Calu3 (cell line): ENCODE measurements at regions of chr17 and their contacts with region 1.

Region 1: DNA sequence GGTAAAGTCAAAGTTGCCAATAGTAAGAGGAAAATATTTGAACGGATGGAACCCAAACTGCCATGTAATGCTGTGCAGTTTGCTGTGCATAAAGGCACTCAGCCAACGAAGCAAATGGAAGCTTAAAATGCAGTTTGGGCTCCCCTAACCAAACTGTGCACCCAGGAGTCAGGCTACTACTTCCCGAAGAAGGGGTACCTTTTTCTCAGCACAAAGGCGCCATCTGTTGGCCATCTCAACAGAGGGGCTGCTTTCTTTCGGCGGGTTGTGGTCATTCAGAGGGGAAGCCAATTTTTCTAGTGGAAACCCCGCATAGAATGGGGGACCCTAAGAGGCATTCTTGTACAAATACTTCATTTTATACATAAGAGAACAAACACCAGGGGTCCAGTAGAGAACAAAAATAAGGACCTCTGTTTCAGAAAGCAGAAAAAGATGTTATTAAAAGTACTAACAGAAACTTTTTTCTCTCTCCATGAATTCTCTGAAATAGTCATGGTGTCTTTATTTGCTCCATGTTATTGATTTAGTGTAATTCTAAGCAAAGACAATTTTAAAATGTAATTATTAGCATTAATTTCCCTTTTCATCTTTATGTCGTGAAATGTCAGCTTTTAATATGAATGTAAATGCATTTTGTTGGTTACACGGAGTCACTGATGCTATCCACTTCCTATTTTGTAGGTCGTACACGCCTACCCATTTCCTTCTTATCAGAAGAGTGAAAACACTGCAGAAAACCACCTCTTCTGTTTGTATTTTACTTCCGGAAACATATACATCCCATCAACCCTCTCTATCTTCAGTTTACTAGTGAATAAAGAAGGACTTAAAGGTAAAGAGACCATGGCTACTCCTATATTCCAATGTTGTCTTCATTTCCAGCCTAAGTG is 453.3 kb downstream of the KCNJ2 start:
- DNase-seq: peak; percentile 58
- H3K4me3 Mint-ChIP-seq: no peak overlapping the region
- H3K27ac Mint-ChIP-seq: no peak overlapping the region
- H3K4me1 Mint-ChIP-seq: no peaks in the 10 kb centered on the region
- H3K27me3 Mint-ChIP-seq: peaks cover under 1% of the 10 kb centered on the region
- CTCF ChIP-seq: peak; percentile 29

Region 2: GRCh38 chr17:69574257-69575197 is 1048.1 kb before region 1 on chr17:
- CTCF ChIA-PET with region 1: no interaction called
- intact Hi-C with region 1: loop called (anchors 1 kb)
- DNase-seq: no peak
- H3K4me3 Mint-ChIP-seq: no peak overlapping the region
- H3K27ac Mint-ChIP-seq: no peak overlapping the region
- H3K4me1 Mint-ChIP-seq: no peaks in the 10 kb centered on the region
- H3K27me3 Mint-ChIP-seq: no peaks in the 10 kb centered on the region
- CTCF ChIP-seq: no peak

Region 3: DNA sequence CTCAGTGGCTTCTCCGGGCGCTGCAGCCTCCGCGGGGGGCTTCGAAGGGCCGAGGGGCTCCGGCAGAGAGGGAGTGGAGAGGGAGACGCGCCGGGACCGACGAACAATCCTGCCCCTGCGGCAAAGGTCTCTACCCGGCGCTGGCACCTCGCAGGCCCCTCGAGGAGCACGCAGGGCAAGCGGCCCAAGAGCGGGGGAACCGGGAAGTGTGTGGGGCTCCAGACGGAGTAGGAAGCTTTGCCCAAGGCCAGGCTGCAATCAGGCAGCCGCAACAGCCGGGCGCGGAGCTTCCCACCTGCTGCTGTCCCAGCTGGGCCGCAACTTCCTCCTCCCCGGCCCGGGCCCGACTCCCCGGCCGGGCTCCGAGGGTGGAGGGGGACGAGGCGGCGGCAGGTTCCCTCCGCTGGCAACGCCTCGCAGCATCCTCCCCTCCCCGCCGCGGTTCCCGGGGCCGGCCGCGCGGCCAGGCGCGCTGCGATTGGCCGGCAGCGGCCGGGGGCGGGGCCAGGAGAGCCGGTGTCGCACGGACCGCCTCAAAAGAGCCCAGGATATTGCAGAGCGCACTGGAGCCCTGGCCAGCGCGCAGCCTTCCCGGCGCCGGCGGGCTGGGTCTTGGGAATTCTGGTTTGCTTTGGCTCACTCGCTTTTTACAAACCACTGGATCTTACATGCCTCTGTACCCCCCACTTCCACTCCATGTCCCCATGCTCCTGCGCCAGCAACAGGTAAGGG is 453.5 kb before region 1 on chr17 and contains the start of gene KCNJ2:
- CTCF ChIA-PET with region 1: no interaction called
- intact Hi-C with region 1: loop called (anchors 10 kb)
- DNase-seq: peak; percentile 83
- H3K4me3 Mint-ChIP-seq: peak within 1 kb of the TSS; percentile 67
- H3K27ac Mint-ChIP-seq: no peak within 1 kb of the TSS
- H3K4me1 Mint-ChIP-seq: peaks cover 18% of the 10 kb centered on the region
- H3K27me3 Mint-ChIP-seq: peaks cover 70% of the 10 kb centered on the region
- CTCF ChIP-seq: no peak
- total RNA-seq, gene KCNJ2: not detected in 2 replicates

Region 4: GRCh38 chr17:70808596-70808995 is 186.0 kb after region 1 on chr17:
- CTCF ChIA-PET with region 1: no interaction called
- intact Hi-C with region 1: no loop called
- DNase-seq: peak; percentile 3
- H3K4me3 Mint-ChIP-seq: no peak overlapping the region
- H3K27ac Mint-ChIP-seq: no peak overlapping the region
- H3K4me1 Mint-ChIP-seq: no peaks in the 10 kb centered on the region
- H3K27me3 Mint-ChIP-seq: no peaks in the 10 kb centered on the region
- CTCF ChIP-seq: peak; percentile 17